GM23248 (cell line): ENCODE measurements at regions of chr11 and their contacts with region 1.

Region 1: DNA sequence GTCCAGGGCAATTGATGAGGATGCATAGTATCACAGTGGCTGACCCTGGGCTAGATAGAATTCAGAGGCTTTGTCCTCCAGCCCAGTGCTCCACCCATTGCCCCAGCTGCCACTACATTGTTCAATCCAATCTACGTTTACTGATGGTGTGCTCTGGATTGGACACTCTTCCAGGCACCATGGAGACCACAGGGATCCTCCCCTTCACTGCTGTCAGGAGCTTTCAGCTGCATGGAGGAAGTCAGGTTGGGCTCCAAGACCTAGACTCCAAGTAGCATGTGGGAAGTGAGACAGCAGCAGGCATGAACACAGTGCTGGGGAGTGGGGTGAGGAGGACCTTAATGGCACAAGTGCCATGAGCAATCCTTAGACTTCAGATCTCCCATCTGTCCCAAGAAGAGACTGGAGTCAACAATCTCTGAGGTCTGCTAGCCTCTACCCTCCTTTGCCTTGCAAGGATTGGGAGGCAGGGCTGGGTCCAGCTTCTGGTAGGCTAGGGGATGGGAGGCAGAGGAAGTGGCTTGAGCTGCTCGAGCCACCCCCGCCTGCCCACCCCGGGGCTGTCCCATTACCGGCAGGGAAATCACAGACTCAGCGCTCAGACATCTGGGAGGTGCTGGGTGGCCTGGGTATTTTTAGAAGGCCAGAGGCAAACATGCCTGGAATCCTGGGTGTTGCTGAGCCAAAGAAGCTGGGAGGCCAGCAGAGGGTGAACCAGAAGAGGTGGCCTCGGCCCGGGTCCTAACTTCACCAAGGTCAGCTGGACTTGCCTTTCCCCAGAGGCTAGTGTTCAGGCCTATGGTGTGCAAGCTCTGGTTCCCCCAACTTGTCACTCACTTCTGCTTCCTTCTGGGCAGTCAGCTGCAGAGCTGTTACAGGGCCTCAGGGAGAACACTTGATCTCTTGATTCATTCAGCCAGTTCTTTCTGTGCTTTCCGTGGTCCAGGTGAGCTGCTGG is 15.2 kb upstream of the FCHSD2 start:
- DNase-seq: peak; percentile 48
- H3K4me3 ChIP-seq: no peak overlapping the region
- H3K27ac ChIP-seq: no peak overlapping the region
- H3K4me1 ChIP-seq: peaks cover 16% of the 10 kb centered on the region
- H3K27me3 ChIP-seq: no peaks in the 10 kb centered on the region

Region 2: DNA sequence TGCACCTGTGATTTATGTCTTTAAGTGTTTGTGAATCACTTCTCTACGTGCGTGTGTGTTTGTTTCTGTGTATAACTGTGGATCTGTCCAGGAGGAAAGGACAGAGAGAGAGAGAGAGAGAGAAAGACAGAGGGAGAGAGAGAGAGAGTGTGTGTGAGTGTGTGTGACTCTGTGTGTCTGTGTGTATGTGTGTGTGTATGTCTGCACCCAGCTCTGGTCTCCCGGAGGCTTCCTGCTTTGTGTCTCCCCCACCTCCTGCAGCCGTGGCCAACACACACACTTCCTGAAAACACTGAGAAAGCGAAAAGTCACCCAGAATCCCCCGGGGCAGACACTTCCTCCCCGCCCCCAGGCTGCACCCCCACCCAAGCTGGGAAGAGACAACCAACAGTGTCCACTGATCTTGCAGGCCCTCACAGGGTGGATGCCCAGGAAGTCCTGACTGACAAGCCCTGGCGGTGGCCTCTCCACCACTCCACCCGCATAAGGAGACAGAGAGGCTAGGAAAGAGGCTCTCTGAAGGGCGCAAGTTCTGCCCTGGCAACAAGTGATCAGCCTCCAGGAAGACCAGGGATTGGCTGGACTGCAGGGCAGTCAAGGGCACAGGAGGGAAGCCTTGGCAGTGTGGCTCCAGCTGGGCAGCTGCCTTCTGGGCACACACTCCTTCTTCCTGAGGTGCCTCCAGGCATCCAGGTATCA is 435.1 kb before region 1 on chr11:
- in situ Hi-C with region 1: loop called (anchors 25 kb)
- DNase-seq: peak; percentile 90
- H3K4me3 ChIP-seq: peak overlapping the region; percentile 91
- H3K27ac ChIP-seq: peak overlapping the region; percentile 69
- H3K4me1 ChIP-seq: peaks cover 14% of the 10 kb centered on the region
- H3K27me3 ChIP-seq: no peaks in the 10 kb centered on the region

Region 3: GRCh38 chr11:73578592-73579185 is 421.4 kb after region 1 on chr11:
- in situ Hi-C with region 1: no loop called
- DNase-seq: no peak
- H3K4me3 ChIP-seq: no peak overlapping the region
- H3K27ac ChIP-seq: no peak overlapping the region
- H3K4me1 ChIP-seq: peaks cover 13% of the 10 kb centered on the region
- H3K27me3 ChIP-seq: no peaks in the 10 kb centered on the region